Dorsolateral prefrontal cortex (tissue), 120 donors: ENCODE measurements at regions of chr7 and their contacts with region 1.

Region 1: GRCh38 chr7:142385491-142386340 is 127.9 kb upstream of the PRSS58 start:
- DNase-seq: peak in 2 of 10 donors; percentile 48 to 53
- H3K4me3 ChIP-seq: no peak overlapping the region
- H3K27ac ChIP-seq: peak overlapping the region in 5 of 59 donors; percentile 3 to 56 (median 41)
- H3K27me3 ChIP-seq: no peaks in the 10 kb centered on the region
- CTCF ChIP-seq: peak in 54 of 56 donors; percentile 40 to 78 (median 60)

Region 2: GRCh38 chr7:142063551-142064442 is 321.9 kb before region 1 on chr7:
- intact Hi-C with region 1: no loop called
- DNase-seq: peak in 1 of 10 donors; percentile 12
- H3K4me3 ChIP-seq: no peak overlapping the region
- H3K27ac ChIP-seq: no peak overlapping the region
- H3K27me3 ChIP-seq: peaks cover 0 to 36% (median 0%) of the 10 kb centered on the region in 45 donors
- CTCF ChIP-seq: no peak

Region 3: GRCh38 chr7:142359694-142360279 is 25.9 kb before region 1 on chr7:
- intact Hi-C with region 1: loop called in 1 of 2 experiments (anchors 1 kb)
- DNase-seq: no peak
- H3K4me3 ChIP-seq: peak overlapping the region in 1 of 59 donors; percentile 27
- H3K27ac ChIP-seq: peak overlapping the region in 21 of 59 donors; percentile 1 to 62 (median 36)
- H3K27me3 ChIP-seq: no peaks in the 10 kb centered on the region
- CTCF ChIP-seq: peak in 4 of 56 donors; percentile 7 to 16 (median 9)

Region 4: DNA sequence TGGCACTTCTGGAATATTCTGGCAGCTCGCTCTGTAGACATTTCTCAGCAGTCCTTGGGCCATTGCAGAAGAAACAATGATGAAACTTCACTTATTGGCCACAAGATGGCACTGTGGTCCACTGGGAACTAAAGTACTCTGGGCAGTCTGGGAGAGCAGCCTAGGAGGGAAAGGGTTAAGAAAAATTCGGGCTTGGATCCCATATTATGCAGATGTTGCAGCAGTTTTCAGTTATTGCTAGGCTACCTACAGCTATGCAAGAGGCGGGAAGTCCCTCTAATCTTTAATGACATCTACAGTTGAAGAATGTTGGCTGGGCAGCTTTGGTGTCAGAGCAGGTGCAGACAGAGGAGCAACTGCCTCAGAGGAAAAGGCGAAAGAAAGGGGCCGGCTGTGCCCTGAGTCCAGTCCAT is 73.8 kb after region 1 on chr7:
- intact Hi-C with region 1: loop called in 1 of 2 experiments (anchors 5 kb)
- DNase-seq: peak in 1 of 10 donors; percentile 32
- H3K4me3 ChIP-seq: no peak overlapping the region
- H3K27ac ChIP-seq: no peak overlapping the region
- H3K27me3 ChIP-seq: peaks cover 0 to 4% (median 0%) of the 10 kb centered on the region in 45 donors
- CTCF ChIP-seq: peak; percentile 55 to 90 (median 82)

Region 5: GRCh38 chr7:142703655-142704305 is 318.1 kb after region 1 on chr7:
- intact Hi-C with region 1: no loop called
- DNase-seq: no peak
- H3K4me3 ChIP-seq: no peak overlapping the region
- H3K27ac ChIP-seq: no peak overlapping the region
- H3K27me3 ChIP-seq: peaks cover 0 to 7% (median 0%) of the 10 kb centered on the region in 45 donors
- CTCF ChIP-seq: no peak